ENCODE measurements at regions of chr18 and their contacts with region 1.

Region 1: GRCh38 chr18:45248240-45248903 is 366.9 kb upstream of the SLC14A2 start:
- DNase-seq: peak in 1 of 2 donors; percentile 61
- ATAC-seq: peak; percentile 76
- H3K4me3 ChIP-seq: no peak overlapping the region
- H3K27ac ChIP-seq: peak overlapping the region; percentile 99 to 100
- H3K4me1 ChIP-seq: peaks cover 13 to 14% of the 10 kb centered on the region in 2 donors
- H3K27me3 ChIP-seq: no peaks in the 10 kb centered on the region

Region 2: GRCh38 chr18:45014047-45014501 is 234.3 kb before region 1 on chr18:
- intact Hi-C with region 1: loop called in 1 of 2 experiments (anchors 5 kb)
- DNase-seq: peak in 1 of 2 donors; percentile 62
- ATAC-seq: peak; percentile 36
- H3K4me3 ChIP-seq: no peak overlapping the region
- H3K27ac ChIP-seq: peak overlapping the region in 1 of 2 donors; percentile 68
- H3K4me1 ChIP-seq: peaks cover 0 to 8% of the 10 kb centered on the region in 2 donors
- H3K27me3 ChIP-seq: no peaks in the 10 kb centered on the region

Region 3: DNA sequence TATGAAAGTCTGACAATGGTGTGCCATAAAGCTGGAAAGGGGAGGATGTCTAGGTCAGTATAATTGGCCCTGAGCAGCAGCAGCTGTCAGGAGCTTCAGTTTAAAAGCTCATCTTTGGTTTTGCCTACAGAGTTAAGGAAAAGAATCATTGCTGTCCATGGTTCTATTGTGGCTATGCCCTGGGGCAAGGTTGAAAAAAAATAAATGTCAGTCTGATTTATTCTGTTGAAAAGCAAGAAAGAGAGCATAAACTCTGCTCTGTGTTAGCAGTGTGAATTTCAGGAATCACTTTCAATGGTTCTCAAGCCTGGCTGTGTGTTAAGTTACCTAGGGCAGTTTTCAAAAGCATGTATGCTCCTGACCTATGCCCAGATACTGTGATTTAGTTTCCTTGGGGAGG is 121.0 kb before region 1 on chr18:
- intact Hi-C with region 1: no loop called
- DNase-seq: no peak
- ATAC-seq: no peak
- H3K4me3 ChIP-seq: no peak overlapping the region
- H3K27ac ChIP-seq: no peak overlapping the region
- H3K4me1 ChIP-seq: no peaks in the 10 kb centered on the region
- H3K27me3 ChIP-seq: no peaks in the 10 kb centered on the region

Region 4: DNA sequence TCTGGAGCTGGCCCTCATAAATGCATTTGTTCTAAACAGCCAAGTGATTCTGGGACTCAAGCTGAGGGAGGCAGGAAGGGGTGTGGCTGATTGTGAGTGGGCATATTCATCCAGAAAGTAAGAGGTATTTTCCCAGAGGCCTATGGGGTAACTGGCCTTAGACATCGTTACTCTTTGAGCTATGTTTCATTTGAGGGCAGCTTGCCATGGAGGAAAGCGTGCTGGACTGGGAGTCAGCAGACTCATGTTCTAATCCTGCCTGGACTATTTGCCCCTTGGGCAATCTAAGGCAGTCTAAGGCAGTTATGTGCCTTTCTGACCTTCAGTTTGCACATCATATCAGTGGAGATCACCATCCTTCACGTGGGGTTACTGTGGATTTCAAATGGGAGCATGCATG is 273.4 kb after region 1 on chr18:
- intact Hi-C with region 1: loop called (anchors 5 kb)
- DNase-seq: peak; percentile 75 to 80
- ATAC-seq: peak; percentile 60
- H3K4me3 ChIP-seq: no peak overlapping the region
- H3K27ac ChIP-seq: peak overlapping the region; percentile 1 to 92
- H3K4me1 ChIP-seq: peaks cover 6 to 7% of the 10 kb centered on the region in 2 donors
- H3K27me3 ChIP-seq: no peaks in the 10 kb centered on the region

Region 5: GRCh38 chr18:45637546-45638327 is 389.4 kb after region 1 on chr18:
- intact Hi-C with region 1: loop called in 1 of 2 experiments (anchors 10 kb)
- DNase-seq: no peak
- ATAC-seq: peak; percentile 83
- H3K4me3 ChIP-seq: no peak overlapping the region
- H3K27ac ChIP-seq: peak overlapping the region; percentile 72 to 91
- H3K4me1 ChIP-seq: peaks cover 3 to 11% of the 10 kb centered on the region in 2 donors
- H3K27me3 ChIP-seq: no peaks in the 10 kb centered on the region

Measured in aorta (tissue), 5 donors.